ENCODE measurements at regions of chr17 and their contacts with region 1.

Region 1: DNA sequence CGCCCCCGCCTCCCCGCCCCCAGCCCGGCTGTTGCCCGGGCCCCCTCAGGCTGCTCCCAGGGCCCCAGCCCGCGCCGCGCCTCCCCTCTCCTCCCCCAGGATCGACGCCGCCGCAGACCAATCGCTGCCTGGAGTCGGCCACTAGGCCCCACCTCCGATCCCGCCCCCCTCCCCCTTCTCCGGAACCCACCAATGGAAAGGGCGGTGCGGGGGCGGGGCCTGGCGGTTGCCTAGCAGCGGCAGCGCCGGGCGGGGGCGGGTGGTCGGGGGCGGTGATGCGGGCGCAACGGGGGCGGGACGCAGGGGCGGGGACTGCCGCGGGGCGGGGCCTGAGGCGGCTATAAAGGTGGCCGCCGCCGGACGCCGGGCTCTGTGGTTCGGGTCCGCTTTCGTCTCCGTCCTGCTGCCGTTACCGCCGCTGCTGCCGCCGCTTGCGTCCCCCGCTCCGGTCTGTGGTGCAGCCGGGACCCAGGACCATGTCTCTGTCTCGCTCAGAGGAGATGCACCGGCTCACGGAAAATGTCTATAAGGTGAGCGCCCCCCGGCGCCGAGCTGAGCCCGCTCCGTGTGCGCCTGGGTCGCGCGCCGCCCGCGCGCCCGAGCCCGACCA is at the start of gene BAIAP2:
- DNase-seq: peak; percentile 90
- ATAC-seq: peak; percentile 92
- H3K4me3 ChIP-seq: peak within 1 kb of the TSS; percentile 77 to 93
- H3K27ac ChIP-seq: peak within 1 kb of the TSS; percentile 81
- H3K4me1 ChIP-seq: peaks cover 48 to 52% of the 10 kb centered on the region in 2 experiments
- H3K27me3 ChIP-seq: no peaks in the 10 kb centered on the region
- CTCF ChIP-seq: no peak
- POLR2A ChIP-seq: peak; percentile 99
- RAD21 ChIP-seq: no peak
- total RNA-seq, gene BAIAP2: 105 TPM

Region 2: DNA sequence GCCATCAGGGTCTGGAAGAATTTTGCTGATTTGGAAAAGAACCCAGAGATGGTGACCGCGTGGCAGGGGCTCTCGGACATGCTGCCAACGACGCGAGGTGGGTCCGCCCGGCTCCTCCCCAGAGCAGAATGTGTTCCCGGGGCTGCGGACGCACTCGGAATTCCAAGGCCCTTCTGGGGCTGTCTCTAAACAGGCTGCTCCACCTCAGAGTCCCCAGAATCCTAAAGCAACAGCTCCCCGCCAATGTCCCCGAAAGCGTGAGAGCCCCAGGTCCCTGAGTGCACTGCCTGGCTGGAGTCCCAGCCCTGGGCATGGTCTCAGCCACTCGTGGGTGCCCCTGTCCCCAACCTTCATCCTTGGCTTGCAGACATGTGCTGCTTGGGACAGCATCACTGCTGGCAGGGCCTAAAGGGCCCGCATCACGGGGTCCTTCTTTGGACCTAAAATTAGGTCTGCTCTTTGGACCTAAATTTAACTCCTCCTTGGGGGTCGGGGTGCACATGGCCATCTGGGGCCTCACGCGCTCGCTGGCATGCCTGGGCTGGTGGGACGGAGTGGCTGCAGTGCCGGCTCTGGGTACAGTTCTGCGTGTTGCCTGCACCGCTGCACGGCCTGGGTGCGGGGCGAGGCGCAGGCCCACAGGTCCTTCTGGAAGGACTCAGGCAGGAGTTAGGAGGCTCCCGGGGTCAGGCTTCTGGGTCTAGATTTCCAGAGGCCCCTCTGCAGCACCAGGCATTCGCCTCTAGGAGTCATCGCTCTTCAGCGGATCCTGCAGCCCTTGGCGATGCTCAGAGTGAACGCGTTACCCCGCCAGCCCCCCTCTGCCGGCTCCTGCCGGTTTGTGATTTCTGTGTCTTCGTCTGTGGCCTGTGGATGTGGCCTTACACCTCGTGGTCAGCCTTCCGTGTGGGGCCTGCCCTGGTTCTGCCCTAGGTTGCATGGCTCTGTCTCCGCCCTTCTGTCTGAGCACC is 85.1 kb before region 1 on chr17:
- CTCF ChIA-PET with region 1: no interaction called
- POLR2A ChIA-PET with region 1: no interaction called
- RAD21 ChIA-PET with region 1: no interaction called
- intact Hi-C with region 1: no loop called
- DNase-seq: no peak
- ATAC-seq: peak; percentile 54; the same call in 1 of the 2 replicates
- H3K4me3 ChIP-seq: no peak overlapping the region
- H3K27ac ChIP-seq: no peak overlapping the region
- H3K4me1 ChIP-seq: no peaks in the 10 kb centered on the region
- H3K27me3 ChIP-seq: no peaks in the 10 kb centered on the region
- CTCF ChIP-seq: no peak; a peak in 1 of 6 replicates
- POLR2A ChIP-seq: no peak
- RAD21 ChIP-seq: no peak

Region 3: DNA sequence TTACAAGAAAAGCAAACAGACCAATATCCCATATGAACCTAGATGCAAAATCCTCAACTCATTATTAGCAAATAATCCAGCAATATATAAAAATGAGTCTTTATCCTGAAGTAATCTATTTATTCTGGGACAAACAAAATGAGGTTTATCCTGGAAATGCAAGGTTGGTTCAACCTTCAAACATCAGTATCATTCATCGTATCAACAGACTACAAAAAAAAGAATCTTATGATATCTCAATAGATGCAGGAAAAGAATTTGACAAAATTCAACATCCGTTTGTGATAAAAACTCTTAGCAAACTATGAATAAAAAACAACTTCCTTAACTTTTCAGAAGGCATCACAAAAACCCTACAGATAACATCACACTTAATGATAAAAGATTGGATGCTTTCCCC is 18.3 kb before region 1 on chr17:
- CTCF ChIA-PET with region 1: no interaction called
- POLR2A ChIA-PET with region 1: no interaction called
- RAD21 ChIA-PET with region 1: no interaction called
- intact Hi-C with region 1: no loop called
- DNase-seq: no peak
- ATAC-seq: no peak
- H3K4me3 ChIP-seq: no peak overlapping the region
- H3K27ac ChIP-seq: no peak overlapping the region
- H3K4me1 ChIP-seq: no peaks in the 10 kb centered on the region
- H3K27me3 ChIP-seq: no peaks in the 10 kb centered on the region
- CTCF ChIP-seq: no peak
- POLR2A ChIP-seq: no peak
- RAD21 ChIP-seq: no peak

Region 4: DNA sequence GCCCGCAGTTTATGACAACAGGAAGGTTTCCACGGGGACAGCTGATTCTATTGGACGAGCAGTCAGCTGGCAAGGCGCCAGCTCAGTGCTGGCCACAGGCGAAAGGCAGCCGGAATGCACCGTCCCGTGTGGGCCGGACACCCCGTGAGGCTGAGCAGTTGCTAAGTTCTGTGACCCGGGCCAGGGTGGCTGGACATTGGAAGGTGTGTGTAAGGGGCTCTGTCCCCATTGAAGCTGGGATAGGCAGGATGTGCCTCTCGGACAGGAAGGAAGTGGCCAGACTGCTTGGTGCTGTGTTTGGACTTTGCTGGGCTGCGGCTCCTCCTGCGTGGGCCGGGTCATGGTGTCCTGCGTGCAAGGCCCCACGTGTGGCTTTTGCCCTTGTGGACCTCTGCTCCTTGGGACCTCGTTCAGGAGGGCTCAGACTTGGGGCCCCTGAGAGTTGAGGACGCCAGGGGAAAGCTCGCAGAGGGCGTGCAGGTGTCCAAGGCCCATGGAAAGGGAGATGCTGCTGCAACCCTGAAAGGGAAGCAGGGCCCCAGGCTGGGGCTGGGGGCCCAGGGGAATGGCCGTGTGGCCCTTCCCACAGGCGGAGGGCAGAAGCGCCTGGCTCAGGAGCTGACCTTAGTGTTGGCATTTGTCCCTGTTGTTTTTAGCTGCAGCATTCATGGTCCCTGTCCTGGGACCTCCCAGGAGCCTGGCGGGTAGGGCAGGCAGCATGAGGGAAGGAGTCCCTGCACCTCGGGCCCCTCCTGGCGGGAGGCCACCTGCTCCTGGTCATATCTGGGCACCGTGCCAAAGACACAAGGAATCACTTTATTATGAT is 10.1 kb after region 1 on chr17:
- CTCF ChIA-PET with region 1: interaction called, 5 read pairs
- POLR2A ChIA-PET with region 1: interaction called, 10 read pairs
- RAD21 ChIA-PET with region 1: no interaction called
- intact Hi-C with region 1: no loop called
- DNase-seq: no peak
- ATAC-seq: no peak
- H3K4me3 ChIP-seq: peak overlapping the region in 1 of 2 experiments; percentile 53; a peak in 1 of 4 replicates
- H3K27ac ChIP-seq: peak overlapping the region; percentile 94
- H3K4me1 ChIP-seq: peaks cover 90 to 100% of the 10 kb centered on the region in 2 experiments
- H3K27me3 ChIP-seq: no peaks in the 10 kb centered on the region
- CTCF ChIP-seq: no peak
- POLR2A ChIP-seq: no peak
- RAD21 ChIP-seq: no peak

Region 5: GRCh38 chr17:81057079-81057730 is 22.3 kb after region 1 on chr17:
- CTCF ChIA-PET with region 1: no interaction called
- POLR2A ChIA-PET with region 1: no interaction called
- RAD21 ChIA-PET with region 1: no interaction called
- intact Hi-C with region 1: no loop called
- DNase-seq: no peak
- ATAC-seq: peak; percentile 88
- H3K4me3 ChIP-seq: no peak overlapping the region
- H3K27ac ChIP-seq: peak overlapping the region; percentile 46
- H3K4me1 ChIP-seq: peaks cover 8 to 21% of the 10 kb centered on the region in 2 experiments
- H3K27me3 ChIP-seq: no peaks in the 10 kb centered on the region
- CTCF ChIP-seq: no peak
- POLR2A ChIP-seq: no peak
- RAD21 ChIP-seq: no peak

Region 6: GRCh38 chr17:81101614-81102306 is 66.9 kb after region 1 on chr17:
- CTCF ChIA-PET with region 1: interaction called, 6 read pairs
- POLR2A ChIA-PET with region 1: no interaction called
- RAD21 ChIA-PET with region 1: no interaction called
- intact Hi-C with region 1: loop called (anchors 2 kb)
- DNase-seq: peak; percentile 75
- ATAC-seq: peak; percentile 78
- H3K4me3 ChIP-seq: no peak overlapping the region
- H3K27ac ChIP-seq: peak overlapping the region; percentile 30; the same call in 1 of the 2 replicates
- H3K4me1 ChIP-seq: peaks cover 26 to 40% of the 10 kb centered on the region in 2 experiments
- H3K27me3 ChIP-seq: no peaks in the 10 kb centered on the region
- CTCF ChIP-seq: peak in 2 of 3 experiments; percentile 100; a peak in 4 of 6 replicates
- POLR2A ChIP-seq: no peak
- RAD21 ChIP-seq: no peak

Region 7: DNA sequence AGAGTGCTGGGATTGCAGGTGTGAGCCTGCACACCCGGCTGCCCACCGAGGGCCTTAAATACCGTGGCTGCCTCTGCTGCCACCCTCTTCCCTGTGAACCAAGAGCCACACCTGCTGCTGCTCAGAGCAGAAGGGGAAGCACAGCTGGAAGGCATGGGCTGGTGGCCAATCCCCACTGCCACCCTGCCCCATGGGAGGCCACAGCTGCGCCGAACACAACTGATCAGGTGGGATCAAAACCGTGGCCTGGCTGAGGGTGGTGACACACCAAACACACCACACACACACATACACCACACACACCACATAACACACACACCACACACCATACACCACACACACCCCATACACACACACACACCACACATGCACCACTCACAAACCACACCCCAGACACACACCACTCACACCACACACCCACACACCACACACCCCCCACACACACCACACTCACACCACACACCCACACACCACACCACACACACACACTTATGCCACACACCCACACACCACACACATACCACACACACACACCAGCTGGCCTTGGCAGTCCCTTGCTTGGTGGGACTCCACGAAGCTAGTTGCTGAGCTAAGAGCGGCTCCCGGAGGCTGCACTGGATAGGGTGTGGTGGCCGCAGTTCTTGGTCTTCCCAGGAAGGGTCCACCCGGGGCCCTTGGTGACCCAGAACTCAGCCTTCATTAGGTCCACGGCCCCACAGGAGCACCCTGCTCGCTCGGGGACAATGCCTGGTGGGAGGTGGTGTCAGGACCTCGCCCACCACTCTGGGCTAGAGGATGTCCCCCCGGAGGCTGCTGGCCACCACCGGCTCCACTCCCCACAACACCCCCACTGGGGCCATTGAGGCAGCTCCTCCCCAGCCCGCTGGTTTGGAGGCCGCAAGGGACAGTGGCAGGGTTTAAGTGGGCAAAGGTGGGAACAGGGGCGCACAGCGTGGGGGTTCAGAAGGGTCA is 173.0 kb after region 1 on chr17:
- CTCF ChIA-PET with region 1: no interaction called
- POLR2A ChIA-PET with region 1: no interaction called
- RAD21 ChIA-PET with region 1: no interaction called
- intact Hi-C with region 1: no loop called
- DNase-seq: no peak
- ATAC-seq: no peak
- H3K4me3 ChIP-seq: no peak overlapping the region
- H3K27ac ChIP-seq: no peak overlapping the region; the same call in 1 of the 2 replicates
- H3K4me1 ChIP-seq: no peaks in the 10 kb centered on the region
- H3K27me3 ChIP-seq: no peaks in the 10 kb centered on the region
- CTCF ChIP-seq: no peak
- POLR2A ChIP-seq: no peak
- RAD21 ChIP-seq: no peak

Measured in HCT116 (cell line).